Spleen (tissue), 13 donors: ENCODE measurements at regions of chr15 and their contacts with region 1.

Region 1: GRCh38 chr15:74950078-74951000 is 6.2 kb downstream of the RPP25 start:
- DNase-seq: peak; percentile 79
- H3K4me3 ChIP-seq: no peak overlapping the region
- H3K27ac ChIP-seq: no peak overlapping the region
- H3K4me1 ChIP-seq: peaks cover 3 to 27% (median 17%) of the 10 kb centered on the region in 6 donors
- H3K27me3 ChIP-seq: peaks cover 0 to 10% (median 0%) of the 10 kb centered on the region in 7 donors
- CTCF ChIP-seq: peak; percentile 90 to 99 (median 94)
- POLR2A ChIP-seq: no peak

Region 2: DNA sequence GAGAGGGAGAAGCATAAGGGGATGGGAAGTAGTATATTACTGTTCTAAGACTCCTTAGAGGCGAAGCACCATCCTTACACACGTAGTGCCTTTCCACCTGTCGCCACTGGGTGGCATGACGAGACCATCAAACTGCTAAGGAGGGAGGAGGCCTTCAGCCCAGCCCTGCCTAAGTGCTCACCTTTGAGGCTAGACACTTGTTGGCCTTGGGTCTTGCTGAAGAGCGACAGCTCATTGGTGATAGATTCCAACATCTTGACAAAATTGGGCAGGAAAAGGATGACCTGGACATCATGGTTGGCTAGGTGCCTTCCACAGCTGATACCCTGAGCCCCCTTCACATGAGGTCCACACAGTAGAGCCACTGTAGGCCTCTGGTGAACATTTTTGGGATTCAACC is 315.1 kb before region 1 on chr15:
- intact Hi-C with region 1: loop called (anchors 5 kb)
- DNase-seq: peak; percentile 90
- H3K4me3 ChIP-seq: no peak overlapping the region
- H3K27ac ChIP-seq: no peak overlapping the region
- H3K4me1 ChIP-seq: peaks cover 0 to 34% (median 8%) of the 10 kb centered on the region in 6 donors
- H3K27me3 ChIP-seq: no peaks in the 10 kb centered on the region
- CTCF ChIP-seq: peak; percentile 79 to 96 (median 91)
- POLR2A ChIP-seq: no peak

Region 3: GRCh38 chr15:75227663-75228280 is 277.4 kb after region 1 on chr15:
- intact Hi-C with region 1: no loop called
- DNase-seq: peak; percentile 41
- H3K4me3 ChIP-seq: no peak overlapping the region
- H3K27ac ChIP-seq: no peak overlapping the region
- H3K4me1 ChIP-seq: no peaks in the 10 kb centered on the region
- H3K27me3 ChIP-seq: peaks cover 0 to 35% (median 0%) of the 10 kb centered on the region in 7 donors
- CTCF ChIP-seq: no peak
- POLR2A ChIP-seq: no peak